Dendritic cell treated with granulocyte-macrophage colony-stimulating factor and Interleukin-4, amounts not matched to agents 40 ng/mL and 50 ng/mL, for 4 days (primary cell): ENCODE measurements at regions of chr11 and their contacts with region 1.

Region 1: DNA sequence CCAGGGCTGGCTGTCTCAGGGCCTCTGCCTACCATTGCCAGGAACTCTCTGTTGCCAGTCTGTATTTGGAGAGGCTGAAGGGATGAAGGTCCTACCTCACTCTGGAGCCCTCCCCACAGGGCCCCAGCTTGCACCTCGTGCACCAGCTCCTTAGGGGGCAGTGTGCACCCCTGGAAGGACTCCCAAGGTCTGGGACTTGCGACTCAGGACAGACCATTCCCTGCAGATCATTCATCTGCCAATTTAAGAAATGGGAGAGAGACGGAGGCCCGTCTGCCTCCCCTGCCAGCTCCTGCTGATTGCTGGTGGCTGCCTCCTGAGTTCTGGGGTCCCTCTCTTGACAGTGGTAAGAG is 27.5 kb upstream of the MALAT1 start:
- H3K4me3 Mint-ChIP-seq: peak overlapping the region; percentile 55
- H3K27ac Mint-ChIP-seq: peak overlapping the region; percentile 84
- H3K4me1 Mint-ChIP-seq: peaks cover 25% of the 10 kb centered on the region
- H3K27me3 Mint-ChIP-seq: peaks cover 2% of the 10 kb centered on the region

Region 2: DNA sequence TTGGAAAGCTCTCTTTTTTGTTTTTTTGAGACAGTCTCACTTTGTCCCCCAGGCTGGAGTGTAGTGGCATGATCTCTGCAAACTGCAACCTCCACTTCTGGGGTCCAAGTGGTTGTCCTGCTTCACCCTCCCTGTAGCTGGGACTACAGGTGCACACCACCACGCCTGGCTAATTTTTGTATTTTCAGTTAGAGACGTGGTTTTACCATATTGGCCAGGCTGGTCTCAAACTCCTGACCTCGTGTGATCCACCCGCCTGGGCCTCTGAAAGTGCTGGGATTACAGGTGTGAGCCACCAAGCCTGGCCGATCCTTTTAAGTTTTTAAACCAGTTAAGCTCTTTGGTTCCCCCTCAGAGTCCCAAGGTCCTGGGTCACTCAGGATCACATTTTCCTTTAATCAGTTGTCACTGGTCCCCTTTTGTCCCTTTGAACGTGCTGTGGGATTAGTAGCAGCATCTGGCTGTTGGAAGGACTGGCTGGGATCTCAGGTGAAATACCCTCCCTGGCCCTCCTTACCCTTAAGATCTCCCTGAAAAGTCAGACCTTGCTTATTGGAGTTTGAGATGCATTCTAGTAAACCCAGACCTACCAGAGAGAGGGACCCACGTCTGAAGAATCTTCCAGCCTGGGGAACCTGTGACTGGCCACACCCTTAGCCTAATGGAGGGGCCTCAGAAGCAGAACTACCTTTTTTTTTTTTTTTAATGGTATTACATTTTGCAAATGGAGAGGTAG is 35.6 kb after region 1 on chr11:
- intact Hi-C with region 1: loop called (anchors 1 kb)
- H3K4me3 Mint-ChIP-seq: no peak overlapping the region
- H3K27ac Mint-ChIP-seq: no peak overlapping the region
- H3K4me1 Mint-ChIP-seq: peaks cover 63% of the 10 kb centered on the region
- H3K27me3 Mint-ChIP-seq: no peaks in the 10 kb centered on the region